A673 (cell line): ENCODE measurements at regions of chr4 and their contacts with region 1.

Region 1: GRCh38 chr4:182938205-182938645 is 21.0 kb upstream of the DCTD start:
- DNase-seq: peak; percentile 79
- H3K4me3 ChIP-seq: no peak overlapping the region
- H3K27ac ChIP-seq: no peak overlapping the region
- H3K4me1 ChIP-seq: no peaks in the 10 kb centered on the region
- H3K27me3 ChIP-seq: peaks cover 6% of the 10 kb centered on the region
- CTCF ChIP-seq: peak; percentile 97

Region 2: GRCh38 chr4:182916483-182917181 is 21.6 kb before region 1 on chr4:
- CTCF ChIA-PET with region 1: interaction called, 11 read pairs
- POLR2A ChIA-PET with region 1: no interaction called
- intact Hi-C with region 1: no loop called
- DNase-seq: peak; percentile 55
- H3K4me3 ChIP-seq: peak overlapping the region; percentile 69
- H3K27ac ChIP-seq: peak overlapping the region; percentile 61
- H3K4me1 ChIP-seq: peaks cover 11% of the 10 kb centered on the region
- H3K27me3 ChIP-seq: no peaks in the 10 kb centered on the region
- CTCF ChIP-seq: no peak

Region 3: DNA sequence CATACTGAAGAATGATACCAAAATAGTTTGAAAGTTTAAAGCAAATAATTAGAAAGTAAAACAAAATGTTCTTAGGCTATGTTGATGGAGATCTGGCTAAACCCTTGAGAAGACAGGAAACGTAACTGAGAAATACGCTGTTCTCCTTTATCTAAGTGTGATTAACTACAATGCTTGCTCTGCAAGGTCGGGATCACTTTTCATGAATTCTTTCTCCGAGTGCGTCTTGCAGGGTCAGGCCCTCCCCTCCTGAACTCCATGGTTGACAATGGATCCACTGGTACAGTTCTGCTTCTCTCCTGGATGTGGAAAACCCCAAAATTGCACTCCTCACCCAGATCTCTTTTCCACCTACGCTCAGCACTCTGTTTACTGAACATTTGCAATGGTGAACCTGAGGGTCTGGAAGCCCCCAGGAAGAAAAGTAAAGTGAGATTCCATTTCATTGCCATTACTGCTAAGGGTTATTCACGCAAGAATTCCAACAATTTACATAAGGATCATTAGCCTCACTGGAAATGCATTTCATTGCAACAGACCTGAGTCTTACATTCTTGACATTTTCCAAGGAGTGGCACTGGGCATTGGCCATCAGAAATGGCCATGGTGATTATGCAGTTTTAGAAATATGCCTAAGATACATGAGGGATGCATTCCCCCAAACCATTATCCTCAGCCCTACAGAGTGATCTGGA is 136.2 kb after region 1 on chr4:
- CTCF ChIA-PET with region 1: interaction called, 3 read pairs
- POLR2A ChIA-PET with region 1: no interaction called
- intact Hi-C with region 1: loop called (anchors 1 kb)
- DNase-seq: no peak
- H3K4me3 ChIP-seq: no peak overlapping the region
- H3K27ac ChIP-seq: no peak overlapping the region
- H3K4me1 ChIP-seq: peaks cover 25% of the 10 kb centered on the region
- H3K27me3 ChIP-seq: no peaks in the 10 kb centered on the region
- CTCF ChIP-seq: no peak

Region 4: GRCh38 chr4:183249857-183250256 is 311.6 kb after region 1 on chr4:
- CTCF ChIA-PET with region 1: interaction called, 17 read pairs
- POLR2A ChIA-PET with region 1: no interaction called
- intact Hi-C with region 1: no loop called
- DNase-seq: peak; percentile 62
- H3K4me3 ChIP-seq: no peak overlapping the region
- H3K27ac ChIP-seq: no peak overlapping the region
- H3K4me1 ChIP-seq: no peaks in the 10 kb centered on the region
- H3K27me3 ChIP-seq: no peaks in the 10 kb centered on the region
- CTCF ChIP-seq: peak; percentile 57

Region 5: GRCh38 chr4:183407128-183407585 is 468.9 kb after region 1 on chr4:
- CTCF ChIA-PET with region 1: no interaction called
- POLR2A ChIA-PET with region 1: no interaction called
- intact Hi-C with region 1: loop called (anchors 5 kb)
- DNase-seq: peak; percentile 93
- H3K4me3 ChIP-seq: peak overlapping the region; percentile 54
- H3K27ac ChIP-seq: peak overlapping the region; percentile 81
- H3K4me1 ChIP-seq: peaks cover 27% of the 10 kb centered on the region
- H3K27me3 ChIP-seq: no peaks in the 10 kb centered on the region
- CTCF ChIP-seq: peak; percentile 96